CD4-positive, alpha-beta memory T cell (primary cell): ENCODE measurements at regions of chr11 and their contacts with region 1.

Region 1: GRCh38 chr11:67265633-67266423 is 445 bp upstream of the GRK2 start:
- DNase-seq: peak; percentile 61 to 85 (median 77)
- H3K4me3 ChIP-seq: peak overlapping the region in 1 of 2 donors; percentile 23
- H3K4me3 Mint-ChIP-seq: peak overlapping the region; percentile 77 to 86 (median 80)
- H3K27ac ChIP-seq: peak overlapping the region; percentile 63
- H3K27ac Mint-ChIP-seq: peak overlapping the region; percentile 79 to 94 (median 87)
- H3K4me1 ChIP-seq: peaks cover 61% of the 10 kb centered on the region
- H3K4me1 Mint-ChIP-seq: peaks cover 34 to 82% (median 50%) of the 10 kb centered on the region in 4 donors
- H3K27me3 ChIP-seq: no peaks in the 10 kb centered on the region
- H3K27me3 Mint-ChIP-seq: peaks cover 0 to 5% of the 10 kb centered on the region in 2 donors

Region 2: GRCh38 chr11:67239783-67240575 is 25.8 kb before region 1 on chr11:
- CTCF ChIA-PET with region 1: interaction called, 8 read pairs
- POLR2A ChIA-PET with region 1: interaction called, 72 read pairs
- intact Hi-C with region 1: loop called (anchors 2 kb)
- DNase-seq: peak; percentile 95 to 100 (median 98)
- H3K4me3 ChIP-seq: peak overlapping the region; percentile 52 to 87
- H3K4me3 Mint-ChIP-seq: peak overlapping the region; percentile 96 to 100 (median 99)
- H3K27ac ChIP-seq: peak overlapping the region; percentile 97
- H3K27ac Mint-ChIP-seq: peak overlapping the region; percentile 96 to 100 (median 100)
- H3K4me1 ChIP-seq: peaks cover 39% of the 10 kb centered on the region
- H3K4me1 Mint-ChIP-seq: peaks cover 39 to 62% (median 48%) of the 10 kb centered on the region in 4 donors
- H3K27me3 ChIP-seq: no peaks in the 10 kb centered on the region
- H3K27me3 Mint-ChIP-seq: no peaks in the 10 kb centered on the region

Region 3: DNA sequence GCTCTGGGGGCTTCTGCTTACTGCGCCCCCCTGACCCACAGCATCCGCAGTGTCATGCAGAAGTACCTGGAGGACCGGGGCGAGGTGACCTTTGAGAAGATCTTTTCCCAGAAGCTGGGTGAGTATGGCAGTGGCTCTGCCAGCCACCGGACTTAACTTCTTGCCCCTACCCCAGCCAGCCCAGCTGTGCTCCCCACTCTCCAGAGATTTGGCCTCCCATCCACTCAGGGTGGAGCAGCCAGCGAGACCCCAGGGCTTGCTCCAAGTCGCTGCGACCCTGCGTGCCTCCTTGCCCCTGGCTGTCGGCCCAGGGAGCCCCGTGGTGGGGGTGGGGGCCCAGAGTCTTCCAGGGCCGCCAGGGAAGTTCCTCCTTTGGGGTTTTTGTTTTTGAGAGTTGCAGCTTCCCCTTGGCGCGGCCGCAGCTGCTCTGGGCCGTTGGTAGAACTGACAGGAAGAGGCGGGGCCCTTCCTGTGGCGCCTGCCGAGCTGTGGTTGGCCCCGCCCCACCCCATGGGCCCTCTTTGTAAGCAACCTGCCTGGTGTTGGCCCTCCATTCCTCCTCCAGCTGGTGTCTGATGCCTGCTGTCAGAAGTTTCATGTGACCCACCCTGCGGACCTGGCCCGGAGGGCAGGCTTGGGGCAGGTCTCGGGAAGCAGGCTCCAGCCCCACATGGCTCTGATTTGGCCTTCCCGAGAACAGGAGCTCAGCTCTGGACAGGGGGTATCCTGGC is 11.6 kb after region 1 on chr11:
- CTCF ChIA-PET with region 1: interaction called, 22 read pairs
- POLR2A ChIA-PET with region 1: interaction called, 1,163 read pairs
- intact Hi-C with region 1: loop called (anchors 1 kb)
- DNase-seq: peak; percentile 92 to 96 (median 93)
- H3K4me3 ChIP-seq: peak overlapping the region; percentile 63 to 71
- H3K4me3 Mint-ChIP-seq: peak overlapping the region; percentile 79 to 92 (median 83)
- H3K27ac ChIP-seq: peak overlapping the region; percentile 95
- H3K27ac Mint-ChIP-seq: peak overlapping the region; percentile 94 to 99 (median 97)
- H3K4me1 ChIP-seq: peaks cover 98% of the 10 kb centered on the region
- H3K4me1 Mint-ChIP-seq: peaks cover 25 to 90% (median 54%) of the 10 kb centered on the region in 4 donors
- H3K27me3 ChIP-seq: no peaks in the 10 kb centered on the region
- H3K27me3 Mint-ChIP-seq: no peaks in the 10 kb centered on the region

Region 4: GRCh38 chr11:67303132-67303834 is 37.5 kb after region 1 on chr11 and contains the start of gene SSH3:
- CTCF ChIA-PET with region 1: interaction called, 7 read pairs
- POLR2A ChIA-PET with region 1: interaction called, 88 read pairs
- intact Hi-C with region 1: no loop called
- DNase-seq: peak in 3 of 5 donors; percentile 19 to 42 (median 28)
- H3K4me3 ChIP-seq: peak within 1 kb of the TSS in 1 of 2 donors; percentile 66
- H3K4me3 Mint-ChIP-seq: peak within 1 kb of the TSS; percentile 48 to 80 (median 70)
- H3K27ac ChIP-seq: peak within 1 kb of the TSS; percentile 68
- H3K27ac Mint-ChIP-seq: peak within 1 kb of the TSS in 6 of 7 donors; percentile 47 to 72 (median 64)
- H3K4me1 ChIP-seq: peaks cover 20% of the 10 kb centered on the region
- H3K4me1 Mint-ChIP-seq: peaks cover 7 to 31% (median 14%) of the 10 kb centered on the region in 4 donors
- H3K27me3 ChIP-seq: no peaks in the 10 kb centered on the region
- H3K27me3 Mint-ChIP-seq: no peaks in the 10 kb centered on the region
- total RNA-seq, gene SSH3: 22.5 to 26.3 TPM

Region 5: DNA sequence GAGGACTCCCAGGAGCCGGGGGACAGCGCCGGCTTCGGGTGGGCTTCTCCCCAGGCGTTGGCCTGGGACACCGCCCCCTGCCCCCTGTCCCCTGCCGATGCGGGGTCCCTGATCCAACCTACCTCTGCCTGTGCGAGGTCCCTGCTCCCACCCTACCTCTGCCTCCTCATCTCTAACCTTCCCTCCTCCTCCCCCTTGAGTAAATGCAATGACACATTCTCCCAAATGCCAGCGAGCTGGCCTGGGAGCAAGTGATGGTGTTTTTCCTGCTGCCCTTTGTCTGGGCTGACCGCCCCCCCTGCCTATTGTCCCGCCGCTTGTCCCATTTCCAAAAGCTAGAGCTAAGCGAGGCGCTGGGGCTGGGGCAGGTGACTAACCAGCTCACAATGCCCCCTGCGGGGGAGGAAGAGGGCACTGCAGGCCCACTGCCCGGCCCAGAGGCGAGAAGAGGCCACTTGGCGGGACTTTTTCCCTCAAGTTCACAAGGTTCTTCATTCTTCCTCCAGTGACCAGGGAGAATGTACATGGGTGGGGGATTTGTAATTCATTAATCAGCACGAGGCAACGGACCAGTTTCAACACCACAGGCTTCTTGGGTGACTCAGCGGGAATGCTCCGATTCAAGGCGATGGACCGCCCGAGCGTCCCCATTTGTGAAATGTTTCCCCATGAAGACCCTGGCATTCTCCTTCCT is 108.2 kb after region 1 on chr11:
- CTCF ChIA-PET with region 1: interaction called, 10 read pairs
- POLR2A ChIA-PET with region 1: interaction called, 3 read pairs
- intact Hi-C with region 1: loop called (anchors 5 kb)
- DNase-seq: peak in 3 of 5 donors; percentile 49 to 73 (median 51)
- H3K4me3 ChIP-seq: peak overlapping the region; percentile 34 to 63
- H3K4me3 Mint-ChIP-seq: peak overlapping the region; percentile 73 to 95 (median 86)
- H3K27ac ChIP-seq: peak overlapping the region; percentile 38
- H3K27ac Mint-ChIP-seq: peak overlapping the region; percentile 57 to 97 (median 87)
- H3K4me1 ChIP-seq: peaks cover 53% of the 10 kb centered on the region
- H3K4me1 Mint-ChIP-seq: peaks cover 36 to 67% (median 42%) of the 10 kb centered on the region in 4 donors
- H3K27me3 ChIP-seq: no peaks in the 10 kb centered on the region
- H3K27me3 Mint-ChIP-seq: peaks cover 4% of the 10 kb centered on the region in 2 donors

Region 6: GRCh38 chr11:67391304-67392132 is 125.7 kb after region 1 on chr11 and contains the start of gene RAD9A:
- CTCF ChIA-PET with region 1: interaction called, 7 read pairs
- POLR2A ChIA-PET with region 1: interaction called, 6 read pairs
- intact Hi-C with region 1: loop called (anchors 1 kb)
- DNase-seq: peak; percentile 86 to 93 (median 89)
- H3K4me3 ChIP-seq: peak within 1 kb of the TSS; percentile 63 to 75
- H3K4me3 Mint-ChIP-seq: peak within 1 kb of the TSS; percentile 87 to 93 (median 91)
- H3K27ac ChIP-seq: peak within 1 kb of the TSS; percentile 79
- H3K27ac Mint-ChIP-seq: peak within 1 kb of the TSS; percentile 82 to 94 (median 87)
- H3K4me1 ChIP-seq: peaks cover 17% of the 10 kb centered on the region
- H3K4me1 Mint-ChIP-seq: peaks cover 23 to 46% (median 36%) of the 10 kb centered on the region in 4 donors
- H3K27me3 ChIP-seq: no peaks in the 10 kb centered on the region
- H3K27me3 Mint-ChIP-seq: no peaks in the 10 kb centered on the region
- total RNA-seq, gene RAD9A: 51.8 to 55.9 TPM

Region 7: GRCh38 chr11:67492801-67493547 is 227.1 kb after region 1 on chr11:
- CTCF ChIA-PET with region 1: no interaction called
- POLR2A ChIA-PET with region 1: no interaction called
- intact Hi-C with region 1: no loop called
- DNase-seq: no peak
- H3K4me3 ChIP-seq: no peak overlapping the region
- H3K4me3 Mint-ChIP-seq: no peak overlapping the region
- H3K27ac ChIP-seq: no peak overlapping the region
- H3K27ac Mint-ChIP-seq: peak overlapping the region in 1 of 7 donors; percentile 18
- H3K4me1 ChIP-seq: peaks cover 15% of the 10 kb centered on the region
- H3K4me1 Mint-ChIP-seq: peaks cover 6 to 18% (median 13%) of the 10 kb centered on the region in 4 donors
- H3K27me3 ChIP-seq: no peaks in the 10 kb centered on the region
- H3K27me3 Mint-ChIP-seq: no peaks in the 10 kb centered on the region